Activated CD8-positive, alpha-beta T cell treated with anti-CD3 and anti-CD28 coated beads, Interleukin-2, amount 10 ng/mL, durations not matched to agents 7 days and 5 days (primary cell): ENCODE measurements at regions of chr22 and their contacts with region 1.

Region 1: DNA sequence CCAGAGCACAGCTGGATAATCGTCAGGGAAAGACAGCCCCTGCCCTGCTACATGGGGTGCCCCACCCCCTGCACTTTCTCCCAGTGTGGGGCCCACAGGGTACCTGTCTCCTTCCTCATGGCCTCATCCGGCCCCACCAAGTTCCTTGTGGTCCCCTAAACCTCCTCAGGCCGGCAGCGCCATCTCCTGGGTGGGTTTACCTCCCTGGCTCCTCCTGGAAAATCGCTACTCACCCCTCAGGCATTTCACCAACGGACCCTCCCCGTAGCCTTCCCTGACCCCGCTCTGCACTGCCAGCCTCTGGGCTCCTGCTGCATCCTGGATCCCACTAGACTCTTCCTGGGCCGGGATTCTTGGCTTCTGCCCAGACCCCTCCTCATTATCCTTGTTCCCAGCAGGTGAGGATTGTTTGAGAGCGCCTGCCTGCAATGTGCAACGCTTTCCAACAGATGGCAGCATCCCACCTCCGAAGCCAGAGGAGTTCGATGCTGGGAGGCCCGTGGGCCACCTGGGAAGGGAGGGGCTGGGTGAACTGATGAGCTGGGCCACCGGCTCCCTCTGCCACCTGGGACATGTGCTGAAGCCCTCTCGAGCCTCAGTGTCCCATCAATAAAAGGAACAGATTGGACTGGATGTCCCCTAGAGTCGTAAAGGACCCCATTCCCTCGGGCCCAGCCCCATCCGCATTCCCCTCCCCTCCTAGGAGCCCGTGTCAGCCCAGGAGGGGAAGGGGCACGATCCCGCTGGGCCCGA is 44.2 kb upstream of the TTLL12 start:
- DNase-seq: peak; percentile 76
- ATAC-seq: peak; percentile 66
- H3K4me3 Mint-ChIP-seq: no peak overlapping the region
- H3K27ac Mint-ChIP-seq: peak overlapping the region; percentile 20
- H3K4me1 Mint-ChIP-seq: peaks cover 9% of the 10 kb centered on the region
- H3K27me3 Mint-ChIP-seq: no peaks in the 10 kb centered on the region

Region 2: DNA sequence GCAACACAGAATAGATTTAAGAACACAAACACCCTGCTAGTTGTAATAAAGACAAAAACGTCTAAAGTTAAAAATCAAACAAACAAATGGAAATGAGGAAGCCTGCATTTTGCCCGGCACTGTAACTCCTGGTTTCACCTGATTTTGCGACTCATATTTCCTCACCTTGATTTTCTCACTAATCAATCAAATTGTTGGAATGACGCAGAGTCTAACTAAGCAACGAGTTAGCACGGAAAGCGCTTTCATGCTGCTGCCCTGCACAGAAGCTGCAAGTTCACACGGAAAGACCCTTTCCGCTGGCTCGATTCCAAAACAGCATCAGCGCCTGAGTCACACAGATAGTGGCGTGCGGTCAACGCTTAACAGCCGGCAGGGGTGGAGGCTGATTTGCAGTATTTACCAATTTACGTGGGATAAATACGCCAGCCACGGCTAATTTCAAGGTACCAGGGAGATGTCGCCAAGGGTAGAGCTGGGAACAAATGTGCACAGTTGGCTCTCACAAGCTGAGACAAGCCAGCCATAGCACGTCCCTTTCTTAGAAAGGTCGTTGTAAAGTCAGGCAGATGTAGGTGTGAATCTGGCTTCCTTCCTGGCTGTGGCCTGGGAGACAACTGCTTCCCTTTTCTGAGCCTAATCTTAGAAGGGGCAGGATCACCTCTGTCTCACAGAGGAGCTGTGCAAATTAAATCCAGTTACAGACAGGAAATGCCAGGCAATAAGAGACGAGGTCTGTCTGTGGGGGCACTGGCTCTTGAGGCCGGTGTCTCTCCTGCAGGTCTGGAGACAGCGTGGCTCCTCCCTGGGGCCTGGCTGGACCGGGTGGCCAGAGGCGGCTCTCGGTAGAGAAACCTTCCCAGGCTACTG is 32.7 kb after region 1 on chr22:
- CTCF ChIA-PET with region 1: interaction called, 24 read pairs
- POLR2A ChIA-PET with region 1: no interaction called
- DNase-seq: peak; percentile 93
- ATAC-seq: peak; percentile 89
- H3K4me3 Mint-ChIP-seq: peak overlapping the region; percentile 72
- H3K27ac Mint-ChIP-seq: peak overlapping the region; percentile 93
- H3K4me1 Mint-ChIP-seq: peaks cover 34% of the 10 kb centered on the region
- H3K27me3 Mint-ChIP-seq: peaks cover 3% of the 10 kb centered on the region

Region 3: GRCh38 chr22:43385770-43386641 is 154.9 kb after region 1 on chr22:
- CTCF ChIA-PET with region 1: interaction called, 31 read pairs
- POLR2A ChIA-PET with region 1: no interaction called
- DNase-seq: peak; percentile 78
- ATAC-seq: peak; percentile 93
- H3K4me3 Mint-ChIP-seq: no peak overlapping the region
- H3K27ac Mint-ChIP-seq: no peak overlapping the region
- H3K4me1 Mint-ChIP-seq: peaks cover 10% of the 10 kb centered on the region
- H3K27me3 Mint-ChIP-seq: peaks cover 18% of the 10 kb centered on the region